Sciatic nerve (tissue), 2 donors: ENCODE measurements at regions of chr21 and their contacts with region 1.

Region 1: GRCh38 chr21:36319765-36320420 is at the start of gene MORC3:
- DNase-seq: peak; percentile 99
- ATAC-seq: peak; percentile 100
- total RNA-seq, gene MORC3: 58.8 TPM

Region 2: GRCh38 chr21:35633501-35633900 is 686.4 kb before region 1 on chr21:
- intact Hi-C with region 1: loop called (anchors 5 kb)
- DNase-seq: no peak
- ATAC-seq: no peak